BJ (cell line): ENCODE measurements at regions of chr1 and their contacts with region 1.

Region 1: GRCh38 chr1:203486618-203487370 is 7.2 kb upstream of the OPTC start:
- DNase-seq: no peak
- H3K4me3 ChIP-seq: no peak overlapping the region
- H3K27me3 ChIP-seq: no peaks in the 10 kb centered on the region
- CTCF ChIP-seq: no peak

Region 2: GRCh38 chr1:203217139-203217655 is 269.6 kb before region 1 on chr1:
- CTCF ChIA-PET with region 1: no interaction called
- POLR2A ChIA-PET with region 1: no interaction called
- DNase-seq: no peak
- H3K4me3 ChIP-seq: no peak overlapping the region
- H3K27me3 ChIP-seq: peaks cover 8% of the 10 kb centered on the region
- CTCF ChIP-seq: 0 out of 2 replicates have a peak, but pooled peaks have one; percentile 10

Region 3: GRCh38 chr1:203368624-203369451 is 118.0 kb before region 1 on chr1:
- CTCF ChIA-PET with region 1: interaction called, 47 read pairs
- POLR2A ChIA-PET with region 1: no interaction called
- DNase-seq: peak; percentile 61
- H3K4me3 ChIP-seq: no peak overlapping the region
- H3K27me3 ChIP-seq: peaks cover 7% of the 10 kb centered on the region
- CTCF ChIP-seq: peak; percentile 59

Region 4: DNA sequence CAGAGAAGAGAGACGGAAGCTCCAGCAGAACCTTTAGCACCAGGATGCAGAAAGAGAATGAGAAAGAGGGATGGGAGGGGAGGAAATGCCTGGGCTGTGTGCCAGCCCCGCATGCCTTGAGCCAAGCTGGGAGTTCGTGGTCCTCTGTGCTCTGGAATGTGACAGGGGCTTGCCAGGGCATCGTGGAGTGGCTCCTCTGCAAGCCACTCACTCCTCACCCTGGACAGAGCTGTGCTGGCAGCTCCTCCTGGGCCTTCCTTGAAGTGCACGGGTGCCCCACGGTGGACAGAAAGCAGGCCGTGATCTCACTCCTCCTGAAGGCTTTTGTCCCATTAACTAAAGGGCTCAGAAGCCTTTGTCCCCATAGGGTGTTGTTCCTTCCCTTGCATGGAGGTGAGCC is 46.0 kb before region 1 on chr1:
- CTCF ChIA-PET with region 1: interaction called, 60 read pairs
- POLR2A ChIA-PET with region 1: no interaction called
- DNase-seq: no peak
- H3K4me3 ChIP-seq: no peak overlapping the region
- H3K27me3 ChIP-seq: no peaks in the 10 kb centered on the region
- CTCF ChIP-seq: peak; percentile 68

Region 5: DNA sequence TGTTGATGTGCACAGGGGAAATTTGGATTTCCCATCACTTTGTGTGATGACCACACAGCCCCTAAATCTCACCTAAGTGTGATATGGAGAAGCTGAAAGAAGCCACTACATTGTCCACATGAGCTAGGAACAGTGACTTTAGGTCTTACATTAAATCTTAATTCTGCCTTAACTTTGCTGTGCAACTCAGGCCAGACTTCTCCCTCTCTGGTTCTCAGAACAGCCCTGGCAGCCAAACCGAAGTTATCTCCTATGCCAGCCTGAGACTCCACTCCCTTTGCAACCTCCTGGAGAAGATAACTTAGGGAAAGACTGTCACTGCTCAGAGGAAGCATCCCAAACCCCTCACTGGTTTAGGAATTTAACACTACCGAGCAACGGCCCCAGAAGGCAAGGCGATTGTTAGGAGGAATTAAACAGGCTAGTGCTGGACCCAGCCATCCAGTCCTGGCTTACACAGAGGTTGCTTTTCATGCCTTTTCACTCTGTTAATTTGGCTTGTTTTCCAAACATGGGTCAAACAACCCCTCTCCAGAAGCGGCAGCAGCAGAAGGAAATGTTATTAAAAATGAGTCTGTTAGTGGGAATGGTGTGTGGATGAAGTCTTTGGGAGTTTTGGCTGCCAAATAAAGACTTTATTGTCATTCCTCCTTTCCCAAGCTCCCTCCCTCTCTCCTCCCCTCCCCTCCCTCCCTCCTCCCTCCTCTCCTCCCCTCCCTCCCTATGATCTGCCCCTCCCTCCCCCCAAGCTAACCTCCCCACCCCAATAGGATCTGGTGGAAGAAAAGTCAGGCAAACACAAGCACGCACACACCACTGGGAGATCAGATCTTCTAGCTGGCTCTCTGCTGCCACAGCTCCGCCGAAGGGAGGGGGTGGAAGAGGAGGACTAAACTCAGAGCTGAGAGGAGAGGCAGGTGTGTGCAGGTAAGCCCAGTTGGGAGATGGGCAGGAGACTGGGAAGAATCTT is 11.5 kb before region 1 on chr1 and contains the start of gene PRELP:
- CTCF ChIA-PET with region 1: interaction called, 25 read pairs
- POLR2A ChIA-PET with region 1: interaction called, 3 read pairs
- DNase-seq: no peak
- H3K4me3 ChIP-seq: peak within 1 kb of the TSS; percentile 40
- H3K27me3 ChIP-seq: no peaks in the 10 kb centered on the region
- CTCF ChIP-seq: 0 out of 2 replicates have a peak, but pooled peaks have one; percentile 20
- polyA plus RNA-seq, gene PRELP: 2.8 and 3.9 TPM in 2 replicates